Mammary epithelial cell (primary cell): ENCODE measurements at regions of chr20 and their contacts with region 1.

Region 1: DNA sequence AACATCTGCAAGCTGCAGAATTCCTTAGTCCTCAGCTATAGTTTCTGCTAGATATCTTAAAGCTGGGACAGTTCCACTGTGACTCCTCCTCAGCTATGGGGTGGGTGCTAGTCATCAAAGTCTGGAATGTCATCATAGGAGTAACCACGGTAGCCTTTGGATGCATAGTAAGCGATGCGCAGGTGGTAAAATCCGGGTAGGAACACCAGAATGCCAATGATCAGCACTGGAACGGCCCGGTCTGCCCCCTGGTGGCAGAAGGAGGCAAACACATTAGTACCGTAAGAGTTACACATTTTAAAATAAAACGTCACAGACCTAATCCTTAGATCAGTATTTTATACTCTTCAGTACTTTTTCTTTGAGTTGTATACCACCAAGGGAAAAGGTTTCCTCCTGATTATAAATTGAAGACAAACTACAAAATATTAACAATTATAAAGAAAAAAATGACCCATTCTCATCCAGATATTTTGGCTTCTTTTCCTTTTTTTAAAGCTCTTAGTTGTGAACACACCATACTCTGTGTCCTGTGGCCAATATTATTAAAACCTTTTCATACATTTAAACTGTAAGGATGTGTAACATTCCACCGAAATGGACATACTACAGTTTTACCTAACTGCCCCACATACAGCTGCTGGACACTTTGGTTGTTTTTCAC is 18.9 kb downstream of the PCNA start:
- DNase-seq: peak; percentile 56
- H3K4me3 ChIP-seq: no peak overlapping the region
- H3K27ac ChIP-seq: no peak overlapping the region
- H3K4me1 ChIP-seq: no peaks in the 10 kb centered on the region
- H3K27me3 ChIP-seq: no peaks in the 10 kb centered on the region
- CTCF ChIP-seq: peak; percentile 76 to 79

Region 2: GRCh38 chr20:4949833-4950178 is 151.0 kb before region 1 on chr20:
- CTCF ChIA-PET with region 1: interaction called, 5 read pairs
- dilution Hi-C with region 1: no loop called
- in situ Hi-C with region 1: no loop called
- intact Hi-C with region 1: loop called (anchors 1 kb)
- DNase-seq: peak; percentile 9
- H3K4me3 ChIP-seq: no peak overlapping the region
- H3K27ac ChIP-seq: no peak overlapping the region
- H3K4me1 ChIP-seq: peaks cover 16% of the 10 kb centered on the region
- H3K27me3 ChIP-seq: no peaks in the 10 kb centered on the region
- CTCF ChIP-seq: peak; percentile 49 to 61

Region 3: DNA sequence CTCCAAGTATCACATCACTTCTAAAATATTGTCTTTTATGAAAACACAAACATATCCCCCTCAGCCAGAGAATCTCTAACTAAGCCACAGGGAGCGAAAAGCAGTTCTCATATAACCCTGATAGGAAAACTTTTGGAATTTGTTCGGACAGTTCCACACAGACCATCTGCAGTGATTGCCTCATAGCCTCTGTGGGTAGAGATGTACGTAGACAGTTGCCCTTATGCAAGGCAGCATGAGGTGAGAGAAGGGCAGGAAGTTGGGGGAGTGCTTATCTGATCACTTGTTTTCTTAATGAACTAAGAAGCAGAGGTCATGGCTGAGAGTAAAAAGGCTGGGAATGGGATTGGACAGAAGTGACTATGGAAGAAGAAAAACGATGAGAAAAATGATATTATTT is 139.1 kb before region 1 on chr20:
- CTCF ChIA-PET with region 1: no interaction called
- dilution Hi-C with region 1: no loop called
- in situ Hi-C with region 1: loop called in 1 of 2 experiments (anchors 10 kb)
- intact Hi-C with region 1: no loop called
- DNase-seq: peak; percentile 19
- H3K4me3 ChIP-seq: no peak overlapping the region
- H3K27ac ChIP-seq: no peak overlapping the region
- H3K4me1 ChIP-seq: no peaks in the 10 kb centered on the region
- H3K27me3 ChIP-seq: no peaks in the 10 kb centered on the region
- CTCF ChIP-seq: no peak

Region 4: GRCh38 chr20:5001174-5002076 is 99.4 kb before region 1 on chr20 and contains the start of gene SLC23A2:
- CTCF ChIA-PET with region 1: no interaction called
- dilution Hi-C with region 1: no loop called
- in situ Hi-C with region 1: no loop called
- intact Hi-C with region 1: loop called (anchors 2 kb)
- DNase-seq: no peak
- H3K4me3 ChIP-seq: peak within 1 kb of the TSS; percentile 76 to 85 (median 83)
- H3K27ac ChIP-seq: peak within 1 kb of the TSS; percentile 36
- H3K4me1 ChIP-seq: peaks cover 24% of the 10 kb centered on the region
- H3K27me3 ChIP-seq: no peaks in the 10 kb centered on the region
- CTCF ChIP-seq: no peak
- total RNA-seq, gene SLC23A2: 23.8 to 26.1 TPM

Region 5: GRCh38 chr20:5056801-5057599 is 43.8 kb before region 1 on chr20:
- CTCF ChIA-PET with region 1: no interaction called
- dilution Hi-C with region 1: no loop called
- in situ Hi-C with region 1: no loop called
- intact Hi-C with region 1: loop called (anchors 1 kb)
- DNase-seq: peak; percentile 79
- H3K4me3 ChIP-seq: no peak overlapping the region
- H3K27ac ChIP-seq: peak overlapping the region; percentile 11
- H3K4me1 ChIP-seq: peaks cover 23% of the 10 kb centered on the region
- H3K27me3 ChIP-seq: no peaks in the 10 kb centered on the region
- CTCF ChIP-seq: peak; percentile 57 to 65

Region 6: DNA sequence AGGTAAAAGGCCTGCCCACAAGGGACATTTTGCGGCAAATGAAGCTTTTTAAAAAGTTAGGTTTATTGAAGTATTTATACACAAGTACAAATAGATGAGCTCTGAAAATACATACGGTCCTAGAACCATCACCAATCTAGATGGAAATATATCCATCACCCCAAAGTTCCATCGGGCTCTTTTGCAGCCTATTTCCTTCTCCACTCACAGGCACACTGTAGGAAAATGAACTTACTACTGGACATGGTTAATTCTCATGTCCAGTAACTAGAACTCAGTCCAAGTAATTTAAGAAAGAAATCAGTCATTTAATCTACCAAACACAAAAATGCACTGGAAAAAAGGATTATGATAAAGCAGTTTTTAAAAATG is 12.8 kb after region 1 on chr20:
- CTCF ChIA-PET with region 1: no interaction called
- dilution Hi-C with region 1: no loop called
- in situ Hi-C with region 1: no loop called
- intact Hi-C with region 1: no loop called
- DNase-seq: no peak
- H3K4me3 ChIP-seq: peak overlapping the region; percentile 47 to 95 (median 60)
- H3K27ac ChIP-seq: peak overlapping the region; percentile 13
- H3K4me1 ChIP-seq: peaks cover 26% of the 10 kb centered on the region
- H3K27me3 ChIP-seq: no peaks in the 10 kb centered on the region
- CTCF ChIP-seq: no peak

Region 7: DNA sequence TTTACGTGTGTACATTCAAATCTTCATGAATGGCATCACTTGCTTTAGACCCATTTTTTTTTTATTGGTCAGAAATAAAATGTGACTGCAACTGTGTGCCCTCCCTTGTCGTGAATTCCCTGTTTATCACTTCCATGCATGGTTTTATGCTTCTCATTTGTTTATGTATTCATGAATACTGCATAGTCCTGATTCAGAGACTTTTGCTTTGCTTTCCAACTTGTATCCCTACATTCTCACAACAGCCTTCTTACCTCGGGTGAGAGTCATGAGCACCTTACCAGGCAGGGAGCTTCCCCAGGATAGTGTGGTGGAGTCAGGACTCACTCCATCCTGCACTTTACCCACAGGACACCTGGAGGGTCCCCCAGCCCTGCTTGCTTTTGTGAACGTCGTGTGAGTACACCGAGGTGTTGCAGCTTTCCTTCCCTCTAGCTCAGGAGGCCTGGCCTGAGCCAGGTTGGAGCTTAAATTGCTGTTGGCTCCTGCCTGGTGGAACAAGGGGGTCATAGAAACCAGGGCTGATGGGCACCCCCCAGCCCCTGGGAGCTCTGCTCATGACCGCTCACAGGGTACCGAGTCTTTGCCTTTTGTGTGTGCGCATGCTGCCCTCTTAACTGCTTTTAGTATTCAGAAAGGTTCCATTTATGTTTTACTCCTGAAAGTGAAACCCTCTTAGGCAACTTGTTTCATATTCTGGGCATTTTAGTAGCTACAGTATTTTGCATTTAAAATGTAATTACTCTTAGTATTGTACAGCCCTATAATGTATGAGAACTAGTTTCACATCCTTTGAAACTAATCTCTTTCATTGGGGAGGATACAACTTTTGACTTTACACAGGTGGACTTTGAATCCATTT is 92.0 kb after region 1 on chr20:
- CTCF ChIA-PET with region 1: no interaction called
- dilution Hi-C with region 1: no loop called
- in situ Hi-C with region 1: no loop called
- intact Hi-C with region 1: no loop called
- DNase-seq: no peak
- H3K4me3 ChIP-seq: no peak overlapping the region
- H3K27ac ChIP-seq: no peak overlapping the region
- H3K4me1 ChIP-seq: peaks cover 4% of the 10 kb centered on the region
- H3K27me3 ChIP-seq: no peaks in the 10 kb centered on the region
- CTCF ChIP-seq: no peak